Transverse colon (tissue), 4 donors: ENCODE measurements at regions of chr2 and their contacts with region 1.

Region 1: GRCh38 chr2:73685770-73686438 is 43.7 kb upstream of the NAT8 start:
- DNase-seq: peak; percentile 65
- H3K4me3 ChIP-seq: no peak overlapping the region
- H3K27ac ChIP-seq: peak overlapping the region in 3 of 4 donors; percentile 34 to 56 (median 46)
- H3K4me1 ChIP-seq: no peaks in the 10 kb centered on the region
- H3K27me3 ChIP-seq: no peaks in the 10 kb centered on the region
- CTCF ChIP-seq: no peak
- EP300 ChIP-seq: no peak
- POLR2A ChIP-seq: no peak

Region 2: DNA sequence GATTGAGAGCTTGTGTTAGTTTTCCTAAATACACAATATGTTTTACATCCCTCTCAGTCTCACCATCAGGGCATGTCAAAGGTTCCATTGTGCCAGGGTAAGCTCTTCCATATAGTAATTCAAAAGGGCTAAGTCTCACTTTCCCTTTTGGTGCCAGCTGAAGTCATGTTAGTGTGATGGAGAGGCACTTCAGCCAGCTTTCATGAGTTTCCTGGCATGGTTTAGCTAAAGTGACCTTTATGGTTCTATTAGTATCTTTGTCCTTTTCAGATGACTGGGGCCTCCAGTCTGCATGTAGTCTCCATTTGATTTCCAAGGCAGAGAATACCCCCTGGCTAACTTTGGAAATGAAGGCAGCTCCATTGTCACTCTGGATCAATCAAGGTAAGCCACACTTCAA is 70.9 kb before region 1 on chr2:
- in situ Hi-C with region 1: loop called in 1 of 4 experiments (anchors 5 kb)
- intact Hi-C with region 1: no loop called
- DNase-seq: no peak
- H3K4me3 ChIP-seq: no peak overlapping the region
- H3K27ac ChIP-seq: no peak overlapping the region
- H3K4me1 ChIP-seq: no peaks in the 10 kb centered on the region
- H3K27me3 ChIP-seq: no peaks in the 10 kb centered on the region
- CTCF ChIP-seq: no peak
- EP300 ChIP-seq: no peak
- POLR2A ChIP-seq: no peak

Region 3: DNA sequence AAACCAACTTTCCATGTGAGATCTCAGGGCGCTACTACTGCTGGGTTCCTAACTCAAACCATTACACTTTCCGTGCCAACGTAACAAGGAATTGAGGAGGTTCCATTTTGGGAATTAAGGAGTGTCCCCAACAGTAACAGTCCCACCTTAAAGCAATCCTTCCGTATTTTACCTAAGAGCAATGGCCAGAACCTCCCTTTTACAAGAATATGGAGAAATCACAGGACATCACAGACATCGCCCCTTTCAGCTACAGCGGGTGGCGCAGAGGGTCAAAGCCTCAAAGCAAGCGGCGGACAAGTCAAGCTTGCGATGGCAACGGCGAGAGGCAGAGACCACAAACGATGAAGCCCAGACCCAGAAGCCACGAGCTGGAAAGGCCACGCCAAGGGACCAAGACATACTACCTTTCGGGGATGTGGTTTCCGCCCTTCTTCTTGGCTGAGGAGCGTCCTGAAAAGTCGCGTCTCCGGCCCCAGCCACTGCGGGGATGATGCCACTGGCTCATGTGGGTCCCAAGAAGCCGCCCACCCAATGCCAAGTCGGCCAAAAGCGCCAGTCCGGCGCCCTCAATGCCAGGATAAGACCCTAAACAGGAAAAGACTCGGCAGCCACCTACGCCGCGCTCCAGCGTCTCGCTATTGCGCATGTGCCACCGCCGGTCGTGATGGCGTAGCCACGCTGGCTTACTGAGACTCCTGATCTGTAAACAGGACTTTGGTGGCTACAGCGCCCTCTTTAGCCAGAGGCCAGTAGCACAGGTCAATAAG is 93.7 kb after region 1 on chr2 and contains the start of gene DUSP11:
- in situ Hi-C with region 1: loop called in 1 of 4 experiments (anchors 25 kb)
- intact Hi-C with region 1: no loop called
- DNase-seq: peak; percentile 97
- H3K4me3 ChIP-seq: peak within 1 kb of the TSS; percentile 70 to 92 (median 82)
- H3K27ac ChIP-seq: peak within 1 kb of the TSS; percentile 91 to 96 (median 92)
- H3K4me1 ChIP-seq: peaks cover 5 to 23% (median 14%) of the 10 kb centered on the region in 4 donors
- H3K27me3 ChIP-seq: no peaks in the 10 kb centered on the region
- CTCF ChIP-seq: peak; percentile 89 to 92 (median 91)
- EP300 ChIP-seq: no peak
- POLR2A ChIP-seq: peak; percentile 84
- total RNA-seq, gene DUSP11: 9.2 to 35.2 (median 30.8) TPM

Region 4: DNA sequence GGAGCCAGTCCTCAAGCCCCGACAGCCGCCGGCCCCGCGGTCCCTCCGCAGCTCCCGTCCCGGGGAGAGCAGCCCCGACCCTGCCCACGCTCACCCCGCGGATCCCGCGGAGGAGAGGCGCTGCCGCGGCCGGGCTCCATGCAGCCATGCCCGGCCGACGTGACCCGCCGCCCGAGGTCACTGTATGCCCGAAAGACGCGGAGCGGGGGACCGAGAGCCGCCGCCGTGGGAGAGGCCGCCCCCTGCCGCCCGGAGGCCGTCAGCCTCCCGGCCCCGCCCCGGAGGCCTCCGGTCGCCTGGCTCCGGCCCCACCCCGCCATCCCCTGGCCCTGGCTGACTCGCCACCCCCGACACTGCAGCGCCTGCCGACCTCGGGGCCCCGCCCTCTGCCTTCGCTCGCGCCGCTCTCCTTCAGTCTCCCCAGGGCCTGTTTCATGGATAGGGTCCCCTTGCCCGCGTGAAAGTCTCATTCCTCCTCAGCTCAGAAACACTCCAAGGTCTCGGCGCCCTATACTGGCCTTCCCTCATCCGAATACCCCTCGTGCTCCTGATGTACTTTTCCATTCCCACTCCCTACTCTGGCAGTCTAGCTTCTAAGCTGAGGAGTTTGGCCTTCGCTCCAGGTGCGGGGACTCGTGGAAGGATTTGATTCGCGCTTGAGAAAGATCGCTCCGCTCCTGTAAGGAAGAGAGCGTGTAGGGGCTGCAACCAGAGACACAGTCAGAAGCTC is 462.0 kb after region 1 on chr2 and contains the start of gene BOLA3:
- in situ Hi-C with region 1: no loop called
- intact Hi-C with region 1: no loop called
- DNase-seq: peak; percentile 89
- H3K4me3 ChIP-seq: peak within 1 kb of the TSS; percentile 54 to 92 (median 72)
- H3K27ac ChIP-seq: peak within 1 kb of the TSS; percentile 72 to 79 (median 74)
- H3K4me1 ChIP-seq: peaks cover 8 to 22% (median 17%) of the 10 kb centered on the region in 4 donors
- H3K27me3 ChIP-seq: no peaks in the 10 kb centered on the region
- CTCF ChIP-seq: peak in 4 of 5 experiments; percentile 53 to 72 (median 64)
- EP300 ChIP-seq: no peak
- POLR2A ChIP-seq: no peak
- total RNA-seq, gene BOLA3: 3.0 to 51.5 (median 44.0) TPM in 3 of 4 donors, not detected in the other